Activated CD4-positive, alpha-beta T cell treated with anti-CD3 and anti-CD28 coated beads for 36 hours (primary cell): ENCODE measurements at regions of chr11 and their contacts with region 1.

Region 1: DNA sequence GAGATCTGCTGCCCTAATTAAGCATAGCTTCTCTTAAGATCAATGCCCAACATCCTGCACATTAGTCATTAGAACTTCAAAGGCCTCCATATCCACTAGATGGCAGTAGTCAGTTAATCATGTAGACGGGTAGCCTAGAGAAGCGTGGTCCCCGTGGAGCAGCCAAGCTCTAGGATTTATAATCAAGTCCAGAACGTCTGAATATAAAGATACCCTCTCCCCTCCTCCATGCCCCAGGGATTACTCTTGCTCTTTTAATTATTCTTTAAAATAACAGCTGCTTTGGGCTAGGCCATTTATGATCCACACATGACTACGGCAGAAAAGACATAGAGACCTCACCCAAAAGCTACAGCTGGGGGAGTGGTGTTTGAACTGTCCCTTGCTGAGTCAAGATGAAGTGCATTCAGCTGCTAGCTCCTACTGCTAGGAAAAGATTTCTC is 327.6 kb upstream of the PLET1 start:
- DNase-seq: peak; percentile 64
- ATAC-seq: peak; percentile 94
- H3K4me3 Mint-ChIP-seq: no peak overlapping the region
- H3K27ac Mint-ChIP-seq: no peak overlapping the region
- H3K4me1 Mint-ChIP-seq: peaks cover 1% of the 10 kb centered on the region
- H3K27me3 Mint-ChIP-seq: no peaks in the 10 kb centered on the region

Region 2: DNA sequence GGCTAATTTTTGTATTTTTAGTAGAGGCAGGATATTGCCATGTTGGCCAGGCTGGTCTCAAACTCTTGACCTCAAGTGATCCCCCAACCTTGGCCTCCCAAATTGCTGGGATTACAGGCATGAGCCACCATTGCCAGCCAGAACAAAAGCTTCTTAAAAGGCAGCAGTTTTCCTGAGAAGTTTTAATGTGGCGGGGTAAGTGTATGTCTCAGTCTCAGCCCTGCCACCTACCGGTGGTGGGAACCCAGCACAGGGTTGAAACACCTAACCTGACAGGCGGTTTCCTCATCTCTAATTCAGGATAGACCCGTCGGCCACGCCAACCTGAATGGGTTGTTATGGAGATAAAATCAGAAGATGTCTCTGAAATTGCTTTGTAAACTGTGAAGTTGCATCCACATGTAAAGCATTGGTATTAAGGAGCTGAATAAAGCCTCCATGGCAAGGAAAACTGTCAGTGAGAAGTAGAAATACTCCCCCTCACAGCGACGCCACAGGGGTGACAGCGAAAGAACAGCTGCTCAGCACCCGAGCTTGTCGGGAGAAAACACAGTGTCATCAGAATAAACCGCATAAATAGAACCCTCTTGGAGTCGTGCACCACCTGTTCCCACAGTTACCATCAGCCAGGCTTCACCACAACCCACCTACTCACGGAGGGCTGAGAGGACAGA is 207.0 kb after region 1 on chr11:
- CTCF ChIA-PET with region 1: interaction called, 12 read pairs
- POLR2A ChIA-PET with region 1: no interaction called
- intact Hi-C with region 1: loop called (anchors 1 kb)
- DNase-seq: peak; percentile 64
- ATAC-seq: peak; percentile 72
- H3K4me3 Mint-ChIP-seq: no peak overlapping the region
- H3K27ac Mint-ChIP-seq: no peak overlapping the region
- H3K4me1 Mint-ChIP-seq: peaks cover 2% of the 10 kb centered on the region
- H3K27me3 Mint-ChIP-seq: no peaks in the 10 kb centered on the region

Region 3: GRCh38 chr11:113113801-113114706 is 525.8 kb after region 1 on chr11:
- CTCF ChIA-PET with region 1: interaction called, 4 read pairs
- POLR2A ChIA-PET with region 1: no interaction called
- intact Hi-C with region 1: loop called in 1 of 2 experiments (anchors 1 kb)
- DNase-seq: peak; percentile 38
- ATAC-seq: no peak
- H3K4me3 Mint-ChIP-seq: no peak overlapping the region
- H3K27ac Mint-ChIP-seq: no peak overlapping the region
- H3K4me1 Mint-ChIP-seq: no peaks in the 10 kb centered on the region
- H3K27me3 Mint-ChIP-seq: peaks cover 15% of the 10 kb centered on the region